ENCODE measurements at regions of chr15 and their contacts with region 1.

Region 1: DNA sequence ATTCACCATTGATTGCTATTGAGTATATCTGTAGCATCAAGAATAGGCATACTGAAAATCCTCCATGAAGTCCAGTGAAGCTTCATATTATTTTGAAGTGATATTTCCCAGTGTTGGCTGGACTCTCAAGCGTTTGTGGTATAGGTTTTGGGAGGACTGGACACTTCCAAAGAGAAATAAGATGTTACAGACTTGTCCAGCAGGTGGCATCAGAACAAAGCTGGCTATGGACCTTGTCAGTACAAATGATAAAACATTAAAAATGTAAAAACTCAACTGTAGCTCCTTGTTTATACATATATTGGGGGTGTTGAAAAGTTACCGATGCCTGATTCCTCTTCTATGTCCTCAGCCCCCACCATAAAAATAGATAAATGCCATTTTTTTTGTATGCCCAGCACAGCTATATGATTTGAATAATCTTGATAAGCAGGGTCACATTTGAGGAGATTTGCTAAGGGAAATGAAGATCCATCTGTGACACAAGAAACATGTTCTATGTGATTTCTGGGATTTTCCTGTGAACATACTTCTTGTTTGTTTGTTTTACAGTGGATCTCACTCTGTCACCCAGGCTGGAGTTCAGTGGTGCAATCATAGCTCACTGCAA is 54.5 kb upstream of the GOLGA6B start:
- DNase-seq: peak; percentile 60
- H3K4me3 ChIP-seq: no peak overlapping the region
- H3K27ac ChIP-seq: no peak overlapping the region
- H3K4me1 ChIP-seq: no peaks in the 10 kb centered on the region
- H3K27me3 ChIP-seq: no peaks in the 10 kb centered on the region
- CTCF ChIP-seq: peak; percentile 79

Region 2: DNA sequence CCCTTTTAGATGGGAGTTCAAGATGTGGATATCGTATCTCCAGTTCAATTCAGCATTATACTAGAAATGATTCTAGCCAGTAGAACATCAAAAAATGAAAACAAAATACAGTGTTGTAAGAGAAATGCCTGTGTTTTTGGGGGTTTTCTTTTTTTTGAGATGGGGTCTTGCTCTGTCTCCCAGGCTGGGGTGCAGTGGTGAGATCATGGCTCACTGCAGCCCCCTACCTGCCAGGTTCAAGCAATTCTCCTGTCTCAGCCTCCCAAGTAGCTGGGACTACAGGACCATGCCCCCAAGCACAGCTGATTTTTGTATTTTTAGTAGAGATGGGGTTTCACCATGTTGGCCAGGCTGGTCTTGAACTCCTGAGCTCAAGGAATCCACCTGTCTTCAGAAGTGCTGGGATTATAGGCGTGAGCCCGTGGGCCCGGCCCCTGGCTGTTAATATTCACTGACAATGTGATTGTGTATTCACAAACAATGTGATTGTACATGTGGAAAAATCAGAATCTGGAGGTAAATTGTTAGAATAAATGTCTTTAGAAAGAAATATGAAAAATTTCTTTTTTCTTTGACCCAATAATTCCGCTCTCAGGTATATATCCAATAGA is 66.9 kb before region 1 on chr15:
- CTCF ChIA-PET with region 1: no interaction called
- POLR2A ChIA-PET with region 1: no interaction called
- intact Hi-C with region 1: no loop called
- DNase-seq: no peak
- H3K4me3 ChIP-seq: no peak overlapping the region
- H3K27ac ChIP-seq: no peak overlapping the region
- H3K4me1 ChIP-seq: no peaks in the 10 kb centered on the region
- H3K27me3 ChIP-seq: no peaks in the 10 kb centered on the region
- CTCF ChIP-seq: peak; percentile 54

Region 3: GRCh38 chr15:72732516-72732915 is 132.6 kb after region 1 on chr15:
- CTCF ChIA-PET with region 1: interaction called, 10 read pairs
- POLR2A ChIA-PET with region 1: no interaction called
- intact Hi-C with region 1: no loop called
- DNase-seq: no peak
- H3K4me3 ChIP-seq: no peak overlapping the region
- H3K27ac ChIP-seq: no peak overlapping the region
- H3K4me1 ChIP-seq: no peaks in the 10 kb centered on the region
- H3K27me3 ChIP-seq: no peaks in the 10 kb centered on the region
- CTCF ChIP-seq: no peak

Measured in A673 (cell line).